HepG2 (cell line): ENCODE measurements at regions of chr4 and their contacts with region 1.

Region 1: GRCh38 chr4:180664766-180665368 is 1578.3 kb upstream of the TENM3 start:
- DNase-seq: peak; percentile 66
- ATAC-seq: peak; percentile 89
- H3K4me3 ChIP-seq: no peak overlapping the region
- H3K27ac ChIP-seq: no peak overlapping the region
- H3K4me1 ChIP-seq: no peaks in the 10 kb centered on the region
- H3K27me3 ChIP-seq: no peaks in the 10 kb centered on the region
- CTCF ChIP-seq: peak; percentile 73
- EP300 ChIP-seq: no peak
- POLR2A ChIP-seq: no peak
- RAD21 ChIP-seq: no peak

Region 2: DNA sequence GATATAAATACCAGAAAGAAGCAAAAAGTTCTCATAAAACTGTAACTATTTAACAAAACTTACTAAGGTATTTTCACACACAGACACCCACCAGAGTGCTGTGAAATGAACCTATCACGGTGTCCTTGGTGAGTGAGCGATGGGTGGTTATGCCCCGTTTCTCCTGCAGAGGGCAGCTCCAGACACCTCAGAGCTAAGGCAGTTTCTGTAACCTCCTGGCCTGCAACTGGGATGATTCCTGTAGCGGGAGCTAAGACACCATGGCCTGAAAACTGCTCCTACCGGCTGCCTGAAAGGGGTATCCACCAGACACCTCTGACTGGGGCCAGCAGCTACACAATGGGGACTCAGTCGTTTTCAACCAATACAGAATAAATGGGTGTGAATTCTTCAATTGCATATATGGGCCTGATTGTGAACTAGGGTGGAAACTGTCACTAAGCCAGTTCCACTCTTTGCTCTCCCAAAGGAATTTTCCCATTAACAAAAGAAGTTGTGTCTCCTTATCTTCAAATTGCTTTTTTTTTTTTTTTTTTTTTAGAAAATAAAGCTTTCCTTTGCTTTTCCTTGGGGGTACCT is 797.5 kb before region 1 on chr4:
- CTCF ChIA-PET with region 1: no interaction called
- POLR2A ChIA-PET with region 1: no interaction called
- in situ Hi-C with region 1: no loop called
- intact Hi-C with region 1: loop called (anchors 5 kb)
- DNase-seq: peak; percentile 66
- ATAC-seq: peak; percentile 100
- H3K4me3 ChIP-seq: no peak overlapping the region
- H3K27ac ChIP-seq: no peak overlapping the region
- H3K4me1 ChIP-seq: no peaks in the 10 kb centered on the region
- H3K27me3 ChIP-seq: no peaks in the 10 kb centered on the region
- CTCF ChIP-seq: peak; percentile 83
- EP300 ChIP-seq: no peak
- POLR2A ChIP-seq: no peak
- RAD21 ChIP-seq: no peak

Region 3: GRCh38 chr4:180449395-180449956 is 215.4 kb before region 1 on chr4:
- CTCF ChIA-PET with region 1: no interaction called
- POLR2A ChIA-PET with region 1: no interaction called
- in situ Hi-C with region 1: no loop called
- intact Hi-C with region 1: loop called (anchors 2 kb)
- DNase-seq: peak; percentile 46
- ATAC-seq: peak; percentile 88
- H3K4me3 ChIP-seq: 0 out of 6 replicates have a peak overlapping the region, but pooled peaks of 1 of the 3 experiments have one; percentile 23
- H3K27ac ChIP-seq: no peak overlapping the region
- H3K4me1 ChIP-seq: no peaks in the 10 kb centered on the region
- H3K27me3 ChIP-seq: no peaks in the 10 kb centered on the region
- CTCF ChIP-seq: peak; percentile 56
- EP300 ChIP-seq: no peak
- POLR2A ChIP-seq: no peak
- RAD21 ChIP-seq: no peak

Region 4: GRCh38 chr4:180521181-180521580 is 143.7 kb before region 1 on chr4:
- CTCF ChIA-PET with region 1: no interaction called
- POLR2A ChIA-PET with region 1: no interaction called
- in situ Hi-C with region 1: no loop called
- intact Hi-C with region 1: no loop called
- DNase-seq: no peak
- ATAC-seq: no peak
- H3K4me3 ChIP-seq: no peak overlapping the region
- H3K27ac ChIP-seq: no peak overlapping the region
- H3K4me1 ChIP-seq: no peaks in the 10 kb centered on the region
- H3K27me3 ChIP-seq: no peaks in the 10 kb centered on the region
- CTCF ChIP-seq: no peak
- EP300 ChIP-seq: no peak
- POLR2A ChIP-seq: no peak
- RAD21 ChIP-seq: no peak

Region 5: GRCh38 chr4:180960743-180961401 is 296.0 kb after region 1 on chr4:
- CTCF ChIA-PET with region 1: no interaction called
- POLR2A ChIA-PET with region 1: no interaction called
- in situ Hi-C with region 1: no loop called
- intact Hi-C with region 1: loop called (anchors 10 kb)
- DNase-seq: no peak
- ATAC-seq: no peak
- H3K4me3 ChIP-seq: no peak overlapping the region
- H3K27ac ChIP-seq: no peak overlapping the region
- H3K4me1 ChIP-seq: no peaks in the 10 kb centered on the region
- H3K27me3 ChIP-seq: no peaks in the 10 kb centered on the region; a peak in 1 of 5 replicates
- CTCF ChIP-seq: no peak
- EP300 ChIP-seq: no peak
- POLR2A ChIP-seq: no peak
- RAD21 ChIP-seq: no peak

Region 6: DNA sequence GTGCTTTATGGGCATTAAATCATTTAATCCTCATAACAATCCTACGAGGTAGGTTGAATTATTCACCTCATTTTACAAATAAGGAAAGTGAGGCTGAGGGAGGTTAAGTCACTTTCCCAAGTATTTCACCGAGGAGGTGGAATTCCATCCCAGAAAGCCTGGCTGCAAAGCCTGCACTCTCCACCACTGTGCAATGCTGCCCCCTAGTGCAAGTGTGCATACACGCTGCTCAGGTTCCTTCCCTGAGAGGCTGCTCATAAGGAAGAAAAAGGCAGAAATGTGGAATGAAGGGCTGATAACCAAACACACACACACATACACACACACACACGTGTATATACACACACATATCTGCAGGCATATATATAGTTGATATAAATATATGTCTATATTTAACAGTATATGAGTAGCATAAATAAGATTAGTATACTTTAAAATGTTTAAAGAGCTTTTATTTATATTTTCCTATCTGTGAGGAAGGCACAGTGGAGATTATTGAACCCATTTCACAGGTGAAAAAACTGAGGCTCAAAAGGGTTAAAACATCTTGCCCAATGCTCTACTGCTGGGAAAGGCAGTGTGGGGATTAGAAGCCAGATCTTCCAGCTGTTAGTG is 863.8 kb after region 1 on chr4:
- CTCF ChIA-PET with region 1: interaction called, 4 read pairs
- POLR2A ChIA-PET with region 1: no interaction called
- in situ Hi-C with region 1: loop called (anchors 25 kb)
- intact Hi-C with region 1: loop called (anchors 2 kb)
- DNase-seq: peak; percentile 56
- ATAC-seq: peak; percentile 97
- H3K4me3 ChIP-seq: no peak overlapping the region
- H3K27ac ChIP-seq: no peak overlapping the region
- H3K4me1 ChIP-seq: no peaks in the 10 kb centered on the region
- H3K27me3 ChIP-seq: 0 out of 5 replicates have a peak, but pooled peaks cover 1 to 2% of the 10 kb centered on the region in 2 experiments
- CTCF ChIP-seq: peak; percentile 92
- EP300 ChIP-seq: no peak
- POLR2A ChIP-seq: no peak
- RAD21 ChIP-seq: peak; percentile 83